Head of caudate nucleus (tissue), 42 donors: ENCODE measurements at regions of chr21 and their contacts with region 1.

Region 1: DNA sequence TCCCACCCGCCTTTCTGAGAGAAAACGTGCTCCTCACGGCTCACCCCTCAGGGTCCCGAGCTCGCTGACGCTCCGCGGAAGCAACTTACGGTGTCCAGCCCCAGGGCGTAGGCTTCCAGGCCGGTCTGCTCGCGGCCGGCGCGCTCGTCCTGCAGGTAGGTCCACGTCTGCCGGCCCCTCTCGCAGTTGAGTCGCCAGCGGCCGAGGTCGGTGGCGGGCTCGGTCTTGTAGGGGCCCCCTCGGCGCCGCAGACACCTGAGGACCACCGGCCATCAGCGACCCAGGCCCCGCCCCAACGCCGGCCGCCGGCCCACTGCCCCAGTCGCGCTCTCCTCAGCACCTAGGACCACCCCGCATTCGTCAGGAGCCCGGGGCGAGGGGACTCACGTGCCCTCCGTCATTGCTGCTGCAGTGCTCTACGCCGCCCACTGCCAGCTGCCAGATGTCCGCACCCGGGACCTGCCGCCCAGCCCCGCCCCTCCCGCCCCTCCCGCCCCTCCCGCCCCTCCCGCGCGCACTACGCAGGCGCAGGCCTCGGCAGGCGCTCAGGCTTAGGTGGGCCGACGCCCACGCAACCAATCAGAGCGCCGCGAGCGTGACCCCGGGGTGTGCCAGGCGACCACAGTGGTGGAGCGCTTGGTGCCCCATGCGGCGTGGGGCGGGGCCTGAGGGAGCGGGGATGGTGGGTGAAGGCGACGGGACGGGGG is at the start of gene LSS:
- DNase-seq: peak; percentile 93 to 100 (median 98)

Region 2: DNA sequence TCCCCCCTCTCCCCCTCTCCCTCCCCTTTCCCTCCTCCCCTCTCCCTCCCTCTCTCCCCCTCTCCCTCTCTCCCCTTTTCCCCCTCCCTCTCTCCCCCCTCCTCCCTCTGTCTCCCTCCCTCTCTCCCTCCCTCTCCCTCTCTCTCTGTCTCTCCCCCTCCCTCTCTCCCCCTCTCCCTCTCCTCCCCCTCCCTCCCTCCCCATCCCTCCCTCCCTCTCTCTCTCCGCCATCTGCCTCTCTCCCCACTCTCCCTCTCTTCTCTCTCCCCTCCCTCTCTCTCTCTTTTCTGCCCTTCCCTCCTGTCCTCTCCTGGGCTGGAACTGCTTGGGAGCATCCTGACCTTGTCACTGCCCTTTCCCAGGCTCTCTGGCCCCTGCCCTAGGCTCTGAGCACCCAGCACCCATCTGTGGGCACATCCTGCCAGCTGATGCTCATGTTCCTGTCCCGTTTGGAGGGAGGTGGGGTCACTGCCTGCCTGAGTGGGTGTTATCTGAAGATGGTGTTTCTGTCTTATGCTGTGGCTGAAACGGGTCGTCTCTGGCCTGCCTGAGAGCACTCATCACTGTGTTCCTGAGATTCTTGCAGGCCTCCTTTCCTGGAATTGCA is 83.9 kb before region 1 on chr21:
- intact Hi-C with region 1: loop called (anchors 10 kb)
- DNase-seq: peak in 7 of 42 donors; percentile 14 to 70 (median 44)

Region 3: GRCh38 chr21:46285761-46286496 is 57.4 kb after region 1 on chr21 and contains the start of gene YBEY:
- intact Hi-C with region 1: loop called (anchors 5 kb)
- DNase-seq: peak; percentile 69 to 95 (median 92)

Region 4: DNA sequence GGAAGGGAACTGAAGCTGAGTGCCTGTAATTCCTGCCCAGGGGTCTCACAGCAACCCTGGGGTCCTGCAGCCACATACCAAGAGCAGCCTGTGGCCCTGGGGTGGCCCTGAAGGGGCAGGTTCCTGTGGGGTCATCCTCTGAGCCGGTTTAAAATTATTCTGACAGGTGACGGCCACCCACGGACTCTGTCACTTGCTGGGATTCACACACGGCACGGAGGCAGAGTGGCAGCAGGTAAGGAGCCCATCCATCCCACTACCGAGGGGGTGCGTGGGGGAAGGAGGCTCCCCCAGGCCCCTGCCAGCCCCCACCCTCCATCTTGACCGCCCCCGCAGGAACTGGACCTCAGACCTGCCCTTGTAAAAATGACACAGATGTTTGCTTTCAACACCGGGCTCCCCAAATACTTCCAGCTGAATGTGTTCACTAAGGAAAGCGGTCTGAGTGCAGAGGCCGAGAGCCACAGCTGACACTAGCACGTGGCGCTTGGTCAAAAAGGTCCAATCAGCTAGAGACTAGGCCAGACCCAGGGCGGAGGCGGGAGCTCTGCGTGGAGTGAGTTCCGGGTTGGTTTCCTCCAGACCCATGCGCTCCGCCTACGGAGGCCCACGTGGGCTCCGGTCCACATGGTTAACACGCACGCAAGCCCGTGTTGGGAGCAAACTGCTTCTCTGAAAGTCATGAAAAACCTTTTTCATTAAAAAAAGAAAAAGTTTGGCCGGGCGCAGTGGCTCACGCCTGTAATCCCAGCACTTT is 67.7 kb after region 1 on chr21:
- intact Hi-C with region 1: no loop called
- DNase-seq: peak in 31 of 42 donors; percentile 20 to 66 (median 42)